ENCODE measurements at regions of chr12 and their contacts with region 1.

Region 1: GRCh38 chr12:121793838-121794533 is 498 bp upstream of the RHOF start:
- DNase-seq: peak; percentile 88
- H3K4me3 ChIP-seq: peak overlapping the region; percentile 16 to 54 (median 52)
- H3K27ac ChIP-seq: peak overlapping the region; percentile 55
- H3K4me1 ChIP-seq: peaks cover 54% of the 10 kb centered on the region
- H3K27me3 ChIP-seq: no peaks in the 10 kb centered on the region
- CTCF ChIP-seq: peak; percentile 97 to 100

Region 2: DNA sequence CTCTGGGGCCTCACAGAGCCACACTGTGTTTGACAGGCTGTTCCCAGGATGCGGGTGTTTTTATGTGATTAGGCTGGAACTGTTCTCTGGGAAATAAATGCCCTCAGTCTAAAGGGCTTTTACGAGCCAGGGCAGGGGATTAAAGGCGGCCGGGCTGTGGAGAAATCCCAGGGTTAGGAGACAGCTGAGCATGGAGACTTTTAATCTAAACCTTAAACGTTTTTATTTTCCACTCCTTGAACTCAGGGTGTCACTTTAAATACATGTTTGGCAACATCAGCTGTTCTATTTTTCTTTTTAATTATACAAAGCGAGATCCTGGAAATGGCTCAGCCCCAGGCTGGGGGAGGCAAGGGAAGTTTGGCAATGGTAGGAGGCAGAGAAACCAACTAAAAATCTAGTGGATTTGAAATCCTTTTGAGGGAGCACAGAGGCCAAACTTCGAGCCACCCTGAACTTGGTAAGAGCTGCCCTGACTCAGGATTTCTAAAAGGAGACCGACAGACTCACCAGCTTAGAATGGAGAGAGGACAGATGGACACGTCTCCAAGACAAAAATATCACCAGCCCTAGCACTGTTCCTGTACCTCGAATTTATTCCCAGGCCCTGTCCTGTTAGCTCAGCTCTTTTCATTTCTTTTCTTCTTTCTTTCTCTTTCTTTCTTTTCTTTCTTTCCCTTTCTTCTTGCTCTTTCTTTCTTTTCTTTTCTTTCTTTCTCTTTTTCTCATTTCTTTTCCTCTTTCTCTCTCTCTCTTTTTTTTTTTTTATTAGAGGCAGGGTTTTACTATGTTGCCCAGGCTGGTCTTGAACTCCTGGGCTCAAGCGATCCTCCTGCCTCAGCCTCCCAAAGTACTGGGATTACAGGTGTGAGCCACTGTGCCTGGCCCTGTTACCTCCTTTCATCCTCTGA is 183.5 kb before region 1 on chr12:
- CTCF ChIA-PET with region 1: no interaction called
- dilution Hi-C with region 1: no loop called
- in situ Hi-C with region 1: no loop called
- intact Hi-C with region 1: no loop called
- DNase-seq: no peak
- H3K4me3 ChIP-seq: no peak overlapping the region
- H3K27ac ChIP-seq: no peak overlapping the region
- H3K4me1 ChIP-seq: no peaks in the 10 kb centered on the region
- H3K27me3 ChIP-seq: no peaks in the 10 kb centered on the region
- CTCF ChIP-seq: no peak

Region 3: GRCh38 chr12:121697098-121697698 is 96.8 kb before region 1 on chr12:
- CTCF ChIA-PET with region 1: no interaction called
- dilution Hi-C with region 1: no loop called
- in situ Hi-C with region 1: loop called (anchors 10 kb)
- intact Hi-C with region 1: loop called (anchors 1 kb)
- DNase-seq: no peak
- H3K4me3 ChIP-seq: no peak overlapping the region
- H3K27ac ChIP-seq: no peak overlapping the region
- H3K4me1 ChIP-seq: no peaks in the 10 kb centered on the region
- H3K27me3 ChIP-seq: no peaks in the 10 kb centered on the region
- CTCF ChIP-seq: peak; percentile 37 to 40

Region 4: DNA sequence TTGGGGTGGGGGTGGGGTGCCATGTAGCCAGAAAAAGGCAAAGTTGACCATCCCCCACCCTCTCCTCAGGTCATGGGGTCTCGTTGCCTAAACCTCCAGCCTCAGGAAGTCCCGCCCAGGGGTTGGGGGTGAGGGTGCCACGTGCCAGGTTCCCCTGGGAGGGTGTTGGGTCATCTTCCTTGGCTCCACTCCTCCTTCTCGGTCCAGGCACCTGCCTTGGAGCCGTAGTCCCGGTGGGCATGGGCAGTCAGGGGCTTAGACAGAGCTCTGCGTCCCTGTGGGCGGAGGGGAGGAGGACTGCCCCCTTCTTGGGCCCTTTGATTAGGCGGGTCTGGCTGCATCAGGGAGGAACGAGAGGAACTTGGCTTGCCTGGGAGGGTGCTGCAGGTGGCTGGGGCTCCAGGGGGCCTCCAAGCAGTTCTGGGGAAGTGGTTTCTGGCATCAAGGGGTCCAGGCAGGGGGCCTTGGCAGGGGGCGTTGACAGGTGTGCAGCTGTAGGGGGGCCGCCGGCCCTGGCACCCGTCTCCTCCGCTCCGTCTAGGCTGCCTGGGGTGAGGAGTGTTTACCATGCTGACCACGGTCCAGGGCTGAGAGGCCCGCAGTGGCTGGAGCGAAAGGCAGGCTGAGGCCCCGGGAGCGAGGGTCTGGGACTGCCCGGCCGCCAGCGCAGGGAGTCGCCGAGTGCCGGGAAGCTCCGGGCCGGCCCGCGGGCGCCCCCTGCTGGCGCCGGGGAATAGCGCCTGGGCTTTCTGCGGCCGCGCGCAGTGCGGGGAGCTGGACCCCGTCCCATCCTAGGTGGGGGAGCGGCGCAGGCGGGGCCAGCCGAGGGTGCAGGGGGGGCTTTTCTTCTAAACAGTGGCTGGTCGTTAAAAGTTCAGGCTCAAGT is 17.7 kb after region 1 on chr12:
- CTCF ChIA-PET with region 1: interaction called, 61 read pairs
- dilution Hi-C with region 1: no loop called
- in situ Hi-C with region 1: no loop called
- intact Hi-C with region 1: loop called (anchors 1 kb)
- DNase-seq: peak; percentile 43
- H3K4me3 ChIP-seq: peak overlapping the region; percentile 51 to 56 (median 53)
- H3K27ac ChIP-seq: no peak overlapping the region
- H3K4me1 ChIP-seq: peaks cover 20% of the 10 kb centered on the region
- H3K27me3 ChIP-seq: no peaks in the 10 kb centered on the region
- CTCF ChIP-seq: peak; percentile 57 to 82

Region 5: DNA sequence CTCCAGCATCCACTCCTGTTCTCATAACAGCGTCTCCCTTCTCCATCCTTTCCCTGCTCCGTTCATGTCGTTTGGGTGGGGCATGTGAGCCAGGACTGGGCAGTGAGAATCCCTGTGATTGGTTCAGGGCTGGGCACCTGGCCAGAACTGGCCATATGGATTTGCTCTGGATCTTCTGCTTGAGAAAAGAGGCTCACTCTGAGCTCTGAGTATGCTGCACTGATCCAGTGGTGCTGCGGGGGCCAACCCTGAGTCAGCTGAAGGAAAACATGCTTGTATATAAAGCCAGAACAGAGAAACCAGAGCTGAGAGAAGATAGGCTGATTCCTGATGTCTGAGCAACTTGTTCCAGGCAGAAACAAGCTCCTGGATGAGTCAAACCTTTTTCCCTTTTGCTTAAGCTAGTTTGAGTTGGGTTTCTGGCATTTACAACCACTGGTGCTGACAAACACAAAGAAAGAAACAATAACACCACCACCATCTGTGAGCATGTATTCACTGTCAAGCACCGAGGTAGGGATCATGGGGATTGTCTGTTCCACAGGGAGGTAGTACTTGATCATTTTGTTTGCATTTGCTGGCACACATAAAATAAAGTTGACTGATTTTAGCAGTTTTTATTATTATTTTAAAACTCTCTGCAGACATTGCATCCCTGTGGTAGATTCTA is 78.7 kb after region 1 on chr12:
- CTCF ChIA-PET with region 1: no interaction called
- dilution Hi-C with region 1: no loop called
- in situ Hi-C with region 1: no loop called
- intact Hi-C with region 1: no loop called
- DNase-seq: peak; percentile 91
- H3K4me3 ChIP-seq: no peak overlapping the region
- H3K27ac ChIP-seq: no peak overlapping the region
- H3K4me1 ChIP-seq: peaks cover 5% of the 10 kb centered on the region
- H3K27me3 ChIP-seq: no peaks in the 10 kb centered on the region
- CTCF ChIP-seq: no peak

Region 6: DNA sequence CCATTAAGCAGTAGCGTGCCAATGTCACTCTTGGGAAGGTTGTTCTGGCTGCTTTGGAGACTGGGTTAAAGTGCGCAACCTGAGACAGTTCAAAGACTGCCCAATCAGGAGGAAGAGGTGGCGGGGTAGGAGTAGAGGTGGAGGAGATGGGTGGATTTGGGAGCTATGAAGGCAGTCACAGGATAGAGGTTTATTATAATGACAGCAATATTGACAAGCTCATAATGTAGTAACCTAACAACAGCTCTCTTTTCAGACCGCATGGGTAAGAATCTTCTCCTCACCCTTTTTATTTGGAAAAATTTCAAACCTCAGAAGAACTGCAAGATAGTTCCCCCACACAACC is 89.3 kb after region 1 on chr12:
- CTCF ChIA-PET with region 1: interaction called, 21 read pairs
- dilution Hi-C with region 1: loop called (anchors 5 kb)
- in situ Hi-C with region 1: loop called in 1 of 2 experiments (anchors 5 kb)
- intact Hi-C with region 1: loop called (anchors 1 kb)
- DNase-seq: no peak
- H3K4me3 ChIP-seq: no peak overlapping the region
- H3K27ac ChIP-seq: no peak overlapping the region
- H3K4me1 ChIP-seq: peaks cover 6% of the 10 kb centered on the region
- H3K27me3 ChIP-seq: no peaks in the 10 kb centered on the region
- CTCF ChIP-seq: no peak

Region 7: GRCh38 chr12:121917979-121918678 is 124.1 kb after region 1 on chr12 and contains the start of gene CFAP251:
- CTCF ChIA-PET with region 1: no interaction called
- dilution Hi-C with region 1: loop called (anchors 5 kb)
- in situ Hi-C with region 1: no loop called
- intact Hi-C with region 1: no loop called
- DNase-seq: no peak
- H3K4me3 ChIP-seq: no peak within 1 kb of the TSS
- H3K27ac ChIP-seq: no peak within 1 kb of the TSS
- H3K4me1 ChIP-seq: peaks cover 13% of the 10 kb centered on the region
- H3K27me3 ChIP-seq: no peaks in the 10 kb centered on the region
- CTCF ChIP-seq: no peak
- total RNA-seq, gene CFAP251: 18.7 to 25.3 TPM

Measured in mammary epithelial cell (primary cell).